ENCODE measurements at regions of chr6 and their contacts with region 1.

Region 1: GRCh38 chr6:13247627-13248026 is 80.7 kb downstream of the TBC1D7 start:
- DNase-seq: no peak
- H3K4me3 ChIP-seq: no peak overlapping the region
- H3K27ac ChIP-seq: no peak overlapping the region
- H3K4me1 ChIP-seq: no peaks in the 10 kb centered on the region
- H3K27me3 ChIP-seq: no peaks in the 10 kb centered on the region
- CTCF ChIP-seq: no peak
- EP300 ChIP-seq: no peak
- POLR2A ChIP-seq: no peak

Region 2: GRCh38 chr6:13079096-13079723 is 168.4 kb before region 1 on chr6:
- in situ Hi-C with region 1: no loop called
- intact Hi-C with region 1: no loop called
- DNase-seq: no peak
- H3K4me3 ChIP-seq: no peak overlapping the region
- H3K27ac ChIP-seq: no peak overlapping the region
- H3K4me1 ChIP-seq: no peaks in the 10 kb centered on the region
- H3K27me3 ChIP-seq: no peaks in the 10 kb centered on the region
- CTCF ChIP-seq: no peak
- EP300 ChIP-seq: no peak
- POLR2A ChIP-seq: no peak

Region 3: DNA sequence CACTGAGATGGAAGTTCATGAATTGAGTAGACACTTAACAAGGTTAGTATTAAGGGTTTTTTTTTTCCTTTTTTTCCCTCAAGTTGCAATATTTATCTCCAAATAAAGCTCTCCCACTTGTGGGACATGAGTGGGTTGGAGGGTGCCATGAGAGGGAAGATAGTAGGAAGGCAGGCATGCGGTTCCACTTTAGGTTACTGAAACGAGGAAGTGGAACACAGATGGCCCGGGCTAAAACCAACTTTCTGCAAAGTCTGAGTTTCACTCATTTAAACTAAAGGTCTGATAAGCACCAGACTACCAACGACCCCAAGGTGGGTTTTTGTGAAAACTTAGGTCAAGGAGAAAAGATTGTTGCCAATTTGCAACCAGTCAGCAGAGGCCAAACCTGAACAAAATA is 38.6 kb after region 1 on chr6:
- in situ Hi-C with region 1: no loop called
- intact Hi-C with region 1: loop called (anchors 1 kb)
- DNase-seq: no peak
- H3K4me3 ChIP-seq: no peak overlapping the region
- H3K27ac ChIP-seq: no peak overlapping the region
- H3K4me1 ChIP-seq: no peaks in the 10 kb centered on the region
- H3K27me3 ChIP-seq: no peaks in the 10 kb centered on the region
- CTCF ChIP-seq: no peak
- EP300 ChIP-seq: no peak
- POLR2A ChIP-seq: no peak

Region 4: DNA sequence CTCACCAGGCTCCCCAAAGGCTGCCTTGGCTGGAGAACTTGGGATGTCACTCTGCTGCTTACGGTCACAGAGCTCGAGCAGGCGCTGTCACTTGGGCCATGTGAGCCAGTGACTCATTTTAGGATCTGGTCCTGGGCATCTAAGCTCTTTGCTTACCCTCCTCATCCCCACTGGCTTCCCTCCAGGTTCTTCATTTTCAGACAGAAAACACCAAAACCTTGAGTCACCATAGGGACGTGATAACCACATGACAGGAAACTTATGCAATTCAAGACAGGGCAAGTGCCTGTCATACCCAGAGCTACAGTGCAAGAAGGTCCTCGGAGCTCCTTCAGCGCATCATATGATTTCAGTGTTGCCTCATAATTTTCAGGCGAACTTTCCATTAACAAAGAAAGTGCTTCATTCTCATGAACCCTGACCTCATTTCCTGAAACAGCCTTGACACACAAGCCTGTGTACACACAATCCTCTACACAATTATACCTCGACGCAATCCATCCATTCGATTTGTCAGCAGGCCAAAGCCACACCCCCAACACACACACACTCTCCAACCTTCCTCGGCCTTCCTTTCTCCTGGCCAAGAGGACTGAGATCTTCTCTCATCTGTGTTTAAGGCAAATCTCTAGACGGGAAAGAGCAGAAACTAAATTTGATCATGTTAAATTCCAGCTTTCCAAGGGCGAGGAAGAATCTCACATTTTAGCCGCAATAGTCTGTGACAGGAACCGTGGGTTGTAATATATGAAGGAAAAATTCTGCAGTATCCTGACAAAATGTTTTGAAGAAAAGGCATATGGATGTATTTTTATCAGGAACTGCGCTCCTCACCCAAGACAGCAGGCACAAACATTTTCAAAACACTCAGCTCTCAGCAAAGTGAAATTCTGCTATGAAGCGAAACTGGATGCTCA is 55.4 kb after region 1 on chr6:
- in situ Hi-C with region 1: no loop called
- intact Hi-C with region 1: no loop called
- DNase-seq: peak; percentile 82
- H3K4me3 ChIP-seq: peak overlapping the region in 1 of 4 donors; percentile 17
- H3K27ac ChIP-seq: peak overlapping the region; percentile 71 to 84 (median 80)
- H3K4me1 ChIP-seq: peaks cover 16 to 29% (median 24%) of the 10 kb centered on the region in 4 donors
- H3K27me3 ChIP-seq: no peaks in the 10 kb centered on the region
- CTCF ChIP-seq: no peak
- EP300 ChIP-seq: peak; percentile 35
- POLR2A ChIP-seq: no peak

Measured in transverse colon (tissue), 4 donors.